Upper lobe of right lung (tissue), 1 donor: ENCODE measurements at regions of chr7 and their contacts with region 1.

Region 1: DNA sequence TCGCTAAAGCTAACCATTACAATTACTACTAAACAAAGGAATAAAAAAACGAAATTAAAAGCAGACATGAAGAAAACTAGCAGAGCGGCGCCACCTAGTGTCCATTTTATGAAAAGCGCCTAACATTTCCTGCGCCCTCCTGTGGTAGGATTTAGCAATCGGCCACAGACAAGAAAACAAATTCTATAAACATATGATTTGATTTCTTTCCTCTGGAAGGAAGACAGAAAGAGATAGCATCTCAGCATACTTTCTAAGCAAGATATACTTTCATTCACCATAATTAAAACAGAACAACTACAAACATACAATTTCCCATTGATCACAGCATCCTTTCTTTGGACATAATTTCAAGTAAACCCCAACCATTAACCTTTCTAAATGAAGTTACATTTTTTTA is 337.7 kb upstream of the NPVF start:
- DNase-seq: no peak
- ATAC-seq: peak; percentile 75
- H3K4me3 ChIP-seq: no peak overlapping the region
- H3K27ac ChIP-seq: no peak overlapping the region
- H3K4me1 ChIP-seq: no peaks in the 10 kb centered on the region
- H3K27me3 ChIP-seq: no peaks in the 10 kb centered on the region
- CTCF ChIP-seq: peak; percentile 100

Region 2: DNA sequence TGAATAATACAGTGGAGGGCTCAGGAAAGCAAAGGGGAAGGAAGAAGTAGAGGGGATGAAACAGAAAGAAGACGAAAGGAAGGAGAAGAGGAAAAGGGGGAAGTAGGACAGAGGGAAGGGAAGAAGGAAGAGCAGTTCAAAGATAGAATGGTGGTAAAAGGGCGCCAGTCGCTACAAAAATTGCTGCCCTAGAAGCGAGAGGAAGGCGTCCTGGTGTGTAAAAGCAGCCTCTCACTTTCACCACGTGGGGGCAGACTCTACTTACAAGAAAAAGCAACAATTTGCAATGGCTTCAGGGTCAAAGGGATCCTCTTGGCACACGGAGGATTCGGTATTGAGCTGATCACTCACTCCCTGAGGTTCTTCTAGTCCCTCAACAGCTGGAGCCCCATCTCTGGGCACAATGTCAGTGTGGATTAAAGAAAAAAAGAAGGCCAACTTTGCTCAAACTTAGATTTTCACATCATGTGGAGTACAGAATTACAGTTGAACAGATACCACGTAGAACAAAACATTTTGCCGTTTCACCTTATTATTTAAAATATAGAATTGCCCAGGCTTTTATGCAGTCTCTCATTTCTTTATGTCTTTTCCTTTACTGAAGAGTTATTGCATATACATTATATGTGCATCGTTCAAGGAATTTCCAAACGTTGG is 306.2 kb before region 1 on chr7:
- intact Hi-C with region 1: loop called (anchors 5 kb)
- DNase-seq: no peak
- ATAC-seq: peak; percentile 90
- H3K4me3 ChIP-seq: no peak overlapping the region
- H3K27ac ChIP-seq: no peak overlapping the region
- H3K4me1 ChIP-seq: no peaks in the 10 kb centered on the region
- H3K27me3 ChIP-seq: no peaks in the 10 kb centered on the region
- CTCF ChIP-seq: peak; percentile 85